ENCODE measurements at regions of chr10 and their contacts with region 1.

Region 1: DNA sequence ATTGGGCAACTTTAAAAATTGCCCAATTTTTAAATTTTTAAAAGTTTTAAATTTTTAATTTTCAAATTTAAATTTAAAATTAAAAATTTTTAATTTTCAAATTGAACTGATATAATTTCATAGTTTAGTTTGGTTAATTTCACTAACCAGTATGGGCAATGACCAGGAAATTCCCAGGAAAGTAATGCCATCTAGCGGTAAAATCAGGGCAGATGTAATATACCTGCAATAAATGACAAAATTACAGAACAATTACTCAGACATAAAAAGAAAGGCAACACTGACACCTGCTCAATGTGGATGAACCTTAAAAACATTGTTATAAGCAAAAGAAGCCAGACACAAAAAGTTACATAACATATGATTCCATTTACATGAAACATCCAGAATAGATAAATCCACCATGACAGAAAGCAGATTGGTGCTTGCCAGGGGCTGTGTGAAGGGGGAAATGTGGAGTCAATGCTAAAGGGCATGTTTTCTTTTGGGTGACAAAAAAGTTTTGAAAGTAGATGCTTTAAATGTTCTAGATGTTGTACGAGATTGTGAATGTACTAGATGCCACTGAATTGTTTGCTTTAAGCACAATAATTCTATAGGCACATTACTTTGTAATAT is 28.6 kb upstream of the SLC16A12 start:
- DNase-seq: no peak
- H3K4me3 ChIP-seq: no peak overlapping the region
- H3K27ac ChIP-seq: no peak overlapping the region
- H3K4me1 ChIP-seq: peaks cover 2% of the 10 kb centered on the region
- H3K27me3 ChIP-seq: no peaks in the 10 kb centered on the region
- CTCF ChIP-seq: peak; percentile 55 to 74 (median 69)
- EP300 ChIP-seq: no peak
- POLR2A ChIP-seq: no peak

Region 2: GRCh38 chr10:89256340-89256739 is 307.6 kb before region 1 on chr10:
- intact Hi-C with region 1: loop called in 1 of 4 experiments (anchors 5 kb)
- DNase-seq: no peak
- H3K4me3 ChIP-seq: no peak overlapping the region
- H3K27ac ChIP-seq: no peak overlapping the region
- H3K4me1 ChIP-seq: peaks cover 1% of the 10 kb centered on the region
- H3K27me3 ChIP-seq: no peaks in the 10 kb centered on the region
- CTCF ChIP-seq: no peak
- EP300 ChIP-seq: no peak
- POLR2A ChIP-seq: no peak

Region 3: DNA sequence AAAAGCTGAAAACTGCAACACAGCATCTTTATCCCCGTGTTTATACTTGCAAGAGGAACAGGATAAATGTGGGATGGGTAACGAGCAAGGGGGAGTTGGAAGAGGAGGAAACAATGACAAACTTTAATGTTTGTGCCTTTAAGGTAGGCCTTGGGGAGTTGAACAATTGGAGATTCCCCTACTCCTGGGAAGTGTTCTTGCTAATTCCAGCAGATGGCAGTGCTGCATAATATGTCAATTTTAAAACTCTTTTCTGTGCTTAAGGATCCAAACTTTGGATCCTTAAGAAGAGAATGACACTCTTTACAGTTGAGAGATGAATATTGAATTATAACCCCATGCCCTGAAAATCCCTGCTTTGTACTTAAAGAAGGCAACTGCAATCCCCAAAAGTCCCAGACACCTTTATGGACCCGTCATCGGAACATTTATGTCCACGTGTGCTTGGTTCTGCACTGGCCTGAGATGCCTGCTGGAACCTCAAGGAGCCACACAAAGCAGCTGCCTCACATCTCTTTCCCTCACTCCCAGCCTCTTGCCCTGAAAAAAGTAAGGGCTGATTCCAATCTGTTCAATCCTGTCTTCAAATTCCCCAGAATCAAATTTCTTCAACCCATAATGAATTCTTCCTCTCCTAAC is 137.6 kb before region 1 on chr10:
- intact Hi-C with region 1: loop called (anchors 2 to 5 kb)
- DNase-seq: peak in 1 of 5 donors; percentile 38
- H3K4me3 ChIP-seq: no peak overlapping the region
- H3K27ac ChIP-seq: no peak overlapping the region
- H3K4me1 ChIP-seq: no peaks in the 10 kb centered on the region
- H3K27me3 ChIP-seq: no peaks in the 10 kb centered on the region
- CTCF ChIP-seq: peak; percentile 26 to 78 (median 75)
- EP300 ChIP-seq: no peak
- POLR2A ChIP-seq: no peak

Region 4: DNA sequence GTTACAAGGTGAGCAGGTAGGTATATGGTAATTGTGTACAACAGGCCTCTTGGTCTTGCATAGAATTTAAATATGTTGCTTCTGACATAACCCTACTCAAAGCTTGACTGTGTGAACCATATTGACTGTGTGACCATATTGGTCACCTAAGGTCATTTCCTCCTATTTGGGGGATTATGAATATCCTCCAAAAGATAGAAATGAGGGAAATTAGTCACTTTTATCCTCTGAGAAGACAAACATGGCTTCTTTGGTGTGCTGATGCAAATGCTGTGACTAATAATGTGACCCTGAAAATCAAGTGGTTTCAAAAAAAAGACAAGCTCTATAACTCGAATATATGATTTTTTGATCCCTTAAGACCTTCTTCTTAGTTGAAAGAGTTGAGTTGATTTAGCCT is 121.7 kb before region 1 on chr10:
- intact Hi-C with region 1: loop called in 1 of 4 experiments (anchors 2 kb)
- DNase-seq: no peak
- H3K4me3 ChIP-seq: no peak overlapping the region
- H3K27ac ChIP-seq: no peak overlapping the region
- H3K4me1 ChIP-seq: no peaks in the 10 kb centered on the region
- H3K27me3 ChIP-seq: no peaks in the 10 kb centered on the region
- CTCF ChIP-seq: no peak
- EP300 ChIP-seq: no peak
- POLR2A ChIP-seq: no peak

Measured in ovary (tissue), 10 donors.